ENCODE measurements at regions of chr13 and their contacts with region 1.

Region 1: DNA sequence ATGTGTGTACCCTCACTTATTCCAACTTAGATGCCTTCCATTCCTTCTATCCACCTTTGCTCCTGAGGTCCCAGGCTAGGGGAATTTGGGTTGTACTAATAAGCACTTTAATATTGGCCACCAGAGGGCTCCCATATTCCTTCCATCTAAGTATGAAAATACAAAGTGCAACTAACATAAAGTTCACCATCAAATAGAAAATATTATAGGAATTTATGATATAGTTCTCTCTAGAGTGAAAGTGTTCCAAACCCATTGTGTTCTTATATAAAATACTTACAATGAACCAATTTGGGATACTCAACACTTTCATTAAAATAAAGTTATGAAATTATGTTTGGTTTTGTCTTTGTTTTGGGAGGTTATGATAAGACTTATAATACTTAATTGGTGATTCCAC is 62.3 kb downstream of the ITGBL1 start:
- DNase-seq: no peak
- ATAC-seq: peak; percentile 86
- H3K4me3 ChIP-seq: no peak overlapping the region
- H3K27ac ChIP-seq: no peak overlapping the region
- H3K4me1 ChIP-seq: no peaks in the 10 kb centered on the region
- H3K27me3 ChIP-seq: no peaks in the 10 kb centered on the region
- CTCF ChIP-seq: peak; percentile 54 to 67 (median 63)
- EP300 ChIP-seq: no peak
- POLR2A ChIP-seq: no peak
- RAD21 ChIP-seq: peak; percentile 73

Region 2: GRCh38 chr13:101499406-101499805 is 15.4 kb before region 1 on chr13:
- CTCF ChIA-PET with region 1: interaction called, 11 read pairs
- POLR2A ChIA-PET with region 1: no interaction called
- RAD21 ChIA-PET with region 1: no interaction called
- SMC1A ChIA-PET with region 1: no interaction called
- in situ Hi-C with region 1: no loop called
- intact Hi-C with region 1: no loop called
- DNase-seq: no peak
- ATAC-seq: no peak
- H3K4me3 ChIP-seq: no peak overlapping the region
- H3K27ac ChIP-seq: no peak overlapping the region
- H3K4me1 ChIP-seq: no peaks in the 10 kb centered on the region
- H3K27me3 ChIP-seq: peaks cover 0 to 1% of the 10 kb centered on the region in 2 experiments; a peak in 1 of 4 replicates
- CTCF ChIP-seq: no peak
- EP300 ChIP-seq: no peak
- POLR2A ChIP-seq: no peak
- RAD21 ChIP-seq: no peak

Region 3: GRCh38 chr13:101919541-101920181 is 404.9 kb after region 1 on chr13:
- CTCF ChIA-PET with region 1: no interaction called
- POLR2A ChIA-PET with region 1: no interaction called
- RAD21 ChIA-PET with region 1: no interaction called
- SMC1A ChIA-PET with region 1: no interaction called
- in situ Hi-C with region 1: no loop called
- intact Hi-C with region 1: loop called (anchors 10 kb)
- DNase-seq: no peak
- ATAC-seq: peak; percentile 50
- H3K4me3 ChIP-seq: no peak overlapping the region
- H3K27ac ChIP-seq: no peak overlapping the region
- H3K4me1 ChIP-seq: no peaks in the 10 kb centered on the region
- H3K27me3 ChIP-seq: peaks cover 3 to 11% of the 10 kb centered on the region in 2 experiments
- CTCF ChIP-seq: no peak; a peak in 1 of 6 replicates
- EP300 ChIP-seq: no peak
- POLR2A ChIP-seq: no peak
- RAD21 ChIP-seq: 0 out of 2 replicates have a peak, but pooled peaks have one; percentile 8